OCI-LY7 (cell line): ENCODE measurements at regions of chr14 and their contacts with region 1.

Region 1: DNA sequence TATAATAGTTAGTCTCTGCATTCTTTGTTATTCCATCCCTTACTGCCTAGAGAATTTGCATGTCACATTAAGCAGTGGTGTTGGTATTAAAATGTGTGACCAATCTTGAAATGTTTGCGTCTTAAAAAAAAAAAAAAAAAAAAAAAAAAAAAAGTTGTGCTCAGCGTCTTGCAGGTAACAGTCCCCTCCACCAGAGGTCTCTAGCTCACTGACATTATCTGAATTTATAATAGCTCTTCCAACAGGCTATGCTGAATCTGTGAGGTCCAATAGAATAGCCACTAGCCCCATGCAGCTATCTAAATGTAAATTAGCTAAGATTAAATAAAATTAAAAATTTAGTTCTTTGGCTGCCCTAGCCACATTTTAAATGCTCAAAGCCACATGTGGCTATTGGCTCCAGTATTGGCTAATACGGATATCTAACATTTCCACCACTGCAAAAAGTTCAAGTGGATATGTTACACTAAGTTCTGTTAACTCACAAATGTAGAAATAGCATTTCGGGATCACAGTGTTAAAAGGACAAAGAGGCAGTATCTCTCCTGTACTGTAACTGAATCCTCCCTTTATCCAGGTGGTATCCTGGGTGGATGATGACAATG is 28.7 kb downstream of the NKX2-8 start:
- DNase-seq: peak; percentile 59
- H3K4me3 ChIP-seq: no peak overlapping the region
- H3K27ac ChIP-seq: no peak overlapping the region
- H3K4me1 ChIP-seq: no peaks in the 10 kb centered on the region
- CTCF ChIP-seq: peak; percentile 74

Region 2: DNA sequence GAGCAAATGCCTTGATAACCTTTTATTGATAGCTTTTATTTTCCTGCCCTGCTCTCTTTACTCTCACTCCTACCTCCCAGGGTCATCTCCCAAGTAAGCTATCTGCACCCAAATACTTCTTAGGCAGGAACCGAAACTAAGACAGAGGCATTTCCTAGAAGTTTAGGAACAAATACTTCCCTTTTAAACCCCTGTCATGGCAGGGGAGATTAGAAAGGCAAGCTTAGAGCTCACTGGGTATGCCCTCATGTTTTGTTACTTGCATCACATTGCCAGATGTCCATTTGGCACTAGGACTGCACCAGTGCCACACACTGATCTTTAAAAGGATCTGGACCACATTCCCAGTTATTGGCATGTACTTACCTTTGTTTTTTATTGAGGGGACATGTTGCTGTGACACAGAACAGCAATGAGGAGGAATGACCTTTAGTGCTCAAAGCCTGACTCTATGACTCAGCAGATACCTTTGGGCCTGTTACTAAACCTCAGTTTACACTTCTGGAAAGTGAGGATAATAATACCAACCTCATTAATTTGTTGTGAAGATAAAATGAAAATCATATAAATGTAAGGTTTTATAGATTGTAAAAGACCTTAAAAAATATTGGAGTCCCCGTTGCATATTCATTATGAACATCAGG is 192.4 kb before region 1 on chr14:
- CTCF ChIA-PET with region 1: no interaction called
- POLR2A ChIA-PET with region 1: no interaction called
- intact Hi-C with region 1: no loop called
- DNase-seq: no peak
- H3K4me3 ChIP-seq: no peak overlapping the region
- H3K27ac ChIP-seq: no peak overlapping the region
- H3K4me1 ChIP-seq: no peaks in the 10 kb centered on the region
- CTCF ChIP-seq: no peak

Region 3: GRCh38 chr14:36604757-36605505 is 51.2 kb after region 1 on chr14:
- CTCF ChIA-PET with region 1: no interaction called
- POLR2A ChIA-PET with region 1: interaction called, 3 read pairs
- intact Hi-C with region 1: loop called (anchors 5 kb)
- DNase-seq: peak; percentile 66
- H3K4me3 ChIP-seq: no peak overlapping the region
- H3K27ac ChIP-seq: no peak overlapping the region
- H3K4me1 ChIP-seq: no peaks in the 10 kb centered on the region
- CTCF ChIP-seq: peak; percentile 92

Region 4: DNA sequence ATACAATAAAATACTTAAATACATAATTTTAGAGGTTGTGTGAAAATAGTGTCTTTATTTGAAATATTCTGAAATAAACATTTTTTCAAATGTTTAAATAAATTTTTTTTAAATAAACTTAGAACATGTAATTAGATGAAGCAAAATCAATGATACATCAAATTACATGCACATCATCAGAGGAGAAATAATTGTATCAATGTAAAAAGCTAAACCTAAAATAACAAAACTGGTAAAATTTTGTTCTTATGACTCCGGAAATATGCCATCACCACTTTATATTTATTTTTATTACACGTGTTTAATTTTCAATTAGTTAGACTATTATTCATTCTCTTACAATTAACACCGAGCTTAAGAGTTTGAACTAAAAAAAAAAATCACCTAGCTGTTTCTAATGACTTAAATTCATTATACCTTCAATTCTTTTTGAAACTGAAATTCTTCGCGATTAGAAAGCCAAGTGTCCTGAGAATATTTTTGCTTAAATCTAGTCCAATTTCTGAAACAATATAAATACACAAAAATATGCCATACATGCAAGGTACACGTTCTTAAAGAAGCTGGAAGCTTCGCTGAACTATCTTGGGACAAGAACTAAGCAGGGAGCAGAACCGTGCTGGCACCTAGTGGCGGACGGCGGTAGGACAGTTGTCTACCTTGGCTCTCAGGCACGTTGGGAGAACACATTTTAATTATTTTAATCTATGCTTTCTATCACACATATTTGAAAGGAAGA is 388.2 kb after region 1 on chr14:
- CTCF ChIA-PET with region 1: interaction called, 3 read pairs
- POLR2A ChIA-PET with region 1: interaction called, 3 read pairs
- intact Hi-C with region 1: loop called (anchors 2 kb)
- DNase-seq: peak; percentile 52
- H3K4me3 ChIP-seq: no peak overlapping the region
- H3K27ac ChIP-seq: no peak overlapping the region
- H3K4me1 ChIP-seq: no peaks in the 10 kb centered on the region
- CTCF ChIP-seq: peak; percentile 98